ENCODE measurements at regions of chr22 and their contacts with region 1.

Region 1: DNA sequence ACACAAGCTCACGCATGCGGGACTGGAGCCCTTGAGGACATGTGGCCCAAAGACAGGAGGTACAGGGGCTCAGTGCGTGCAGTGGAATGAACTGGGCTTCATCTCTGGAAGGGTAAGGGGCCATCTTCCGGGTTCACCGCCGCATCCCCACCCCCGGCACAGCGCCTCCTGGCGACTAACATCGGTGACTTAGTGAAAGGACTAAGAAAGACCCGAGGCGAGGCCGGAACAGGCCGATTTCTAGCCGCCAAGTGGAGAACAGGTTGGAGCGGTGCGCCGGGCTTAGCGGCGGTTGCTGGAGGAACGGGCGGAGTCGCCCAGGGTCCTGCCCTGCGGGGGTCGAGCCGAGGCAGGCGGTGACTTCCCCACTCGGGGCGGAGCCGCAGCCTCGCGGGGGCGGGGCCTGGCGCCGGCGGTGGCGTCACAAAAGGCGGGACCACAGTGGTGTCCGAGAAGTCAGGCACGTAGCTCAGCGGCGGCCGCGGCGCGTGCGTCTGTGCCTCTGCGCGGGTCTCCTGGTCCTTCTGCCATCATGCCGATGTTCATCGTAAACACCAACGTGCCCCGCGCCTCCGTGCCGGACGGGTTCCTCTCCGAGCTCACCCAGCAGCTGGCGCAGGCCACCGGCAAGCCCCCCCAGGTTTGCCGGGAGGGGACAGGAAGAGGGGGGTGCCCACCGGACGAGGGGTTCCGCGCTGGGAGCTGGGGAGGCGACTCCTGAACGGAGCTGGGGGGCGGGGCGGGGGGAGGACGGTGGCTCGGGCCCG is at the start of gene MIF:
- DNase-seq: peak; percentile 95
- H3K4me3 Mint-ChIP-seq: peak within 1 kb of the TSS; percentile 95
- H3K27ac Mint-ChIP-seq: peak within 1 kb of the TSS; percentile 98
- H3K4me1 Mint-ChIP-seq: peaks cover 34% of the 10 kb centered on the region
- H3K27me3 Mint-ChIP-seq: no peaks in the 10 kb centered on the region
- total RNA-seq, gene MIF: 716 to 730 TPM

Region 2: GRCh38 chr22:23826465-23827199 is 67.5 kb before region 1 on chr22:
- CTCF ChIA-PET with region 1: no interaction called
- POLR2A ChIA-PET with region 1: no interaction called
- DNase-seq: no peak
- H3K4me3 Mint-ChIP-seq: no peak overlapping the region
- H3K27ac Mint-ChIP-seq: peak overlapping the region; percentile 95
- H3K4me1 Mint-ChIP-seq: peaks cover 31% of the 10 kb centered on the region
- H3K27me3 Mint-ChIP-seq: no peaks in the 10 kb centered on the region

Region 3: DNA sequence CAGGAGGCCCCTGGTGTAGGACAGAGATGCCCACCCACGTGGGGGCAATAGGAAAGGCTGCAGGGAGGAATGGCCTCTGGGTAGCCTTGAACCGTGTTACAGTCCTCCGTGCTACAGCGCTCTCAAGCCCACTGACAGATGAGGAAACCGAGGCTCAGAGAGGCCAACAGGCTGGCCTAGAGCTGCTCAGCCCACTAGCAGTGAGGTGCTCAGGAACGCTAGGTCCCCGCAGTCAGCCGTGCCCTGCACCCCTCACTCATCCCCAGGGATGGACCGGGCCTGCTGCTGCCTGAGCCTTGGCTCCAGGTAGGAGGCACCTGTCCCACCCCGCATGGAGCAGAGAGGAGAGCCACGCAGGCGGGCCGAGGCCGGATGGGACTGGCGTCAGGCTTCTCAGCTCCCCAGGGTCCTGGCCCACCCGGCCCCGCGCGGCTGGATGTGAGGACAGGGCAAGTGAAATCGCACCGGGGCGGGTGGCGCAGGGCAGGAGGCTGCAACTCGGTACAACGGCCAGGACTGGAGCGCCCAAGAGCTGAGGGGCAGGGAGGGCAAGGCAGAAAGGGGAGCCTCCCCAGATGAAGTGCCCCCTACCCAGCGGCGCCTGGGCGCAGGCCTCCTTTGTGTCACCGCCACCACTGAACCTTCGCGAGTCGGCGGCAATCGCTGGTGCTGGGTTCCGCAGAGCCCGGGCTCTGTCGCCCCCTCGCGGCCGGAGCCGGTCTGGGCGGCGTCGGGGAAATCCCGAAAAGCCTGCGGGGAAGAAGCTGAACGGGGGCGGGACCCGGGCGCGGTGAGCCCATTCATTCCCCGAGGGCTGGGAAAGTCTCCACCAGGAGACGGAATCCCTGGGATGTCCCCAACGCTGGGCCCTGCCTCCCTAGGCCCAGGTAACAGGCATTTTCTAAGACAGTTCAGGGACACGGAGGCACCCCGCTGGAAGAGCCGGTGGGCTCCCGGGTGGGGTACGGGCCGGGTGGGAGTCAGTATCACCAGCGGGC is 44.8 kb before region 1 on chr22:
- CTCF ChIA-PET with region 1: interaction called, 10 read pairs
- POLR2A ChIA-PET with region 1: no interaction called
- DNase-seq: peak; percentile 85
- H3K4me3 Mint-ChIP-seq: no peak overlapping the region
- H3K27ac Mint-ChIP-seq: no peak overlapping the region
- H3K4me1 Mint-ChIP-seq: peaks cover 6% of the 10 kb centered on the region
- H3K27me3 Mint-ChIP-seq: peaks cover 16% of the 10 kb centered on the region

Region 4: DNA sequence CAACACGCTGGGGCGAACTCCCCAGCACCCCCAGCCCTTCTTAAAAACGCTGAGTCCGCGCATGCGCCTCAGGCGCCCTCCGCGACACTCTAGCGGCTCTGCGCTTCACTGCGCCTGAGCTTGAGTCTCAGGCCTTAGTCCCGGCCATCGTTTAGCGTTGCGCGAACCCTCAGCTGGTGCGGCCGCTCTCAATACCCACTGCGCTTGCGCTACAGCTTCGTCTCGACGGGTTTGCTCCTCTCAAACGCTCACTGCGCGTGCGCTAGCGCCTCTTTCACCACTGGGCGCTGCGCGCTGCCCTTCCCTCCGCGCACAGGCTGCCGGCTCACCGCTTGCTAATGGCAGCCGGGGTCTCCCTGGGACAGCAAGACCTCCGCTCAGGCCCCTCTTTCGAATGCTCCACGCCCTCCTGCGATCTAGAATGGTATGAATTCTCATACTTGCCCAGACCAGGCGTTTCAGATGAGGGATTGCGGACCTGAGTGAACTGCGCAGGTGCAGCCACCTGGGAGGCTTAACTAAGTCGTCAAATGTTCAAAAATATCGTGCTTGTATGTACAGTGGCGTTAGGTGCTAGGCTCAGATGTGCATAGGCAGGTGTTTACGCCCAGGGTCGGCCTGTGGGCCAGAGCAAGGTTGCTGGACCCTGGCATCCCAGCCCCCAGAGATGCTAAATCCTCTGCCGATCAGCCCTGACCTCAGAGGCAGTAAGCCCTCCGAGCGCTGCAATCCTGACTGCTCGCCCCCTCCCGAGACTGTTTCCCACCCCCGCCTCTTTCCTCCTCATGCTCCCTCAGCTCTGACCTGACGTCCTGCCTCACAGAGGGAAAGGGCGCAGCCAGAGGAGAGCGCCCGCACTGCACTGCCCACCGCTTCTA is 36.3 kb before region 1 on chr22 and contains the start of gene SLC2A11:
- CTCF ChIA-PET with region 1: interaction called, 11 read pairs
- POLR2A ChIA-PET with region 1: interaction called, 8 read pairs
- DNase-seq: peak; percentile 96
- H3K4me3 Mint-ChIP-seq: peak within 1 kb of the TSS; percentile 91
- H3K27ac Mint-ChIP-seq: peak within 1 kb of the TSS; percentile 93
- H3K4me1 Mint-ChIP-seq: peaks cover 26% of the 10 kb centered on the region
- H3K27me3 Mint-ChIP-seq: peaks cover 6% of the 10 kb centered on the region
- total RNA-seq, gene SLC2A11: 7.8 to 8.8 TPM

Region 5: GRCh38 chr22:23904573-23905260 is 10.6 kb after region 1 on chr22:
- CTCF ChIA-PET with region 1: interaction called, 24 read pairs
- POLR2A ChIA-PET with region 1: interaction called, 4 read pairs
- DNase-seq: no peak
- H3K4me3 Mint-ChIP-seq: no peak overlapping the region
- H3K27ac Mint-ChIP-seq: no peak overlapping the region
- H3K4me1 Mint-ChIP-seq: peaks cover 5% of the 10 kb centered on the region
- H3K27me3 Mint-ChIP-seq: no peaks in the 10 kb centered on the region

Region 6: GRCh38 chr22:23913661-23914353 is 19.7 kb after region 1 on chr22:
- CTCF ChIA-PET with region 1: interaction called, 24 read pairs
- POLR2A ChIA-PET with region 1: interaction called, 8 read pairs
- DNase-seq: peak; percentile 100
- H3K4me3 Mint-ChIP-seq: peak overlapping the region; percentile 81
- H3K27ac Mint-ChIP-seq: peak overlapping the region; percentile 94
- H3K4me1 Mint-ChIP-seq: peaks cover 32% of the 10 kb centered on the region
- H3K27me3 Mint-ChIP-seq: no peaks in the 10 kb centered on the region